Heart right ventricle (tissue), 16 donors: ENCODE measurements at regions of chr1 and their contacts with region 1.

Region 1: DNA sequence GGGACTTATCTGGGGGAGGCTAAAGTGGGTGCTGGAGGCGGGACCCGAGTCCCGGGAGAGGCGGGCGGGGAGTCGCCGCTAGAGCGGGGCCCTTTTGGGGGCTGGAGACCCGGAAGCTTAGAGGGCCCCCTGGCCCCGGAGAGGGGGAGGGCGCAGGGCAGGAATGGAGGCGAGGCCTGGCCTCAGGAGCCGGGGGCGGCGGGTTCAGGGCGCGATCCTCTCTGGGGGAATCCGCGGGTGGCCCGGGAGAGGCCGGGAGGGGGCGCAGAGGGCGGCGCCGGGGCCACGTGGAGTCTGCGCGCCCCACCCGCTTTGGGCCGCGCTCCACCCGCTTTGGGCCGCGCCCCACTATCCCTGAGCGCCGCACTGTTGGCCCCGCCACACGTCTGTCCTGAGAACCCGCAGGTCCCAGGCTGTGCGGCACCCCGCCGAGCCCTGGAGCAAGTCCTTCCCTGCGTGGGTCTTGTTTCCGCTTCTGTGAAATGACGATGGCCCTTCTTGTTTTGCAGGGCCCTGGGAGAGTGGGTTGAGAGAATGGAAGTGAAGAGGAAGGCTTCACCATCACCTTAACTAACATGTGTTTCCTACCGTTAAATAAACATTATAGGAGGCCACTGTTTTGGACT is 84.4 kb downstream of the NKAIN1 start:
- DNase-seq: peak; percentile 38 to 69
- ATAC-seq: peak; percentile 88 to 95 (median 92)
- H3K4me3 ChIP-seq: peak overlapping the region; percentile 38 to 83 (median 72)
- H3K27ac ChIP-seq: peak overlapping the region; percentile 22 to 85 (median 75)
- H3K4me1 ChIP-seq: peaks cover 0 to 15% (median 5%) of the 10 kb centered on the region in 9 donors
- H3K27me3 ChIP-seq: no peaks in the 10 kb centered on the region
- CTCF ChIP-seq: peak in 6 of 9 donors; percentile 24 to 55 (median 46)

Region 2: DNA sequence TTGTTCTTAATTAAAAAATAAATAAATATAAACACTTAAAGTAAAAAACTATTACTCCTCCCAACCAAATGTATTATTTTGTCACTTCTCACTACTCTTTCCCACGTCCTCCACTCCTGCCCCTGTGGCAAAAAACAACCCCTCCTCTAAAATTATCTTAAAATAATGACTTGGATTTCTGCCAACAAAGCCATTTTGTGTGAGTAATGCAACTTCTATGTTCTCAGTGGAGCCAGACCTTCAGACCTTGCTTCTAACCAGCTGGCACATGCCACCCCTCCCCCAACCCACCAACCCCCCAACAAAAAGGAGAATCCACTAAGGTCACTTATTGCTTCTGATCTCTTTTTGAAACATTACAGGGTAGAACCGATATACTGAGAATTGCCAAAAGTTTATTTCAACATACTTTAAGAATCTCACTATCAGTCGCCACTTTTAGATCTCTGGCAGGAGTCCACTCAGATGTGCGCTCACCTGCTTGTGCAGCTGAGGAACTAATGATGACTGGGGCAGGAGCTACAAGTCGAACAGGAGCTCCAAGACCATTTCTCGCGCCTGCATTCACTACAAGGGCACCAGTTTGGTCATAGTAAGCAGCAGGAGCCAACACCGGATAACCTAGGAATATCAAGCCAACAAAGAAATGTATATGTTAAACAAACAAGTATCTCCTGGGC is 188.5 kb before region 1 on chr1:
- intact Hi-C with region 1: loop called in 1 of 10 experiments (anchors 10 kb)
- DNase-seq: no peak
- ATAC-seq: peak in 5 of 8 donors; percentile 30 to 46 (median 41)
- H3K4me3 ChIP-seq: no peak overlapping the region
- H3K27ac ChIP-seq: peak overlapping the region in 5 of 10 donors; percentile 68 to 82 (median 75)
- H3K4me1 ChIP-seq: peaks cover 8 to 64% (median 47%) of the 10 kb centered on the region in 9 donors
- H3K27me3 ChIP-seq: no peaks in the 10 kb centered on the region
- CTCF ChIP-seq: no peak

Region 3: DNA sequence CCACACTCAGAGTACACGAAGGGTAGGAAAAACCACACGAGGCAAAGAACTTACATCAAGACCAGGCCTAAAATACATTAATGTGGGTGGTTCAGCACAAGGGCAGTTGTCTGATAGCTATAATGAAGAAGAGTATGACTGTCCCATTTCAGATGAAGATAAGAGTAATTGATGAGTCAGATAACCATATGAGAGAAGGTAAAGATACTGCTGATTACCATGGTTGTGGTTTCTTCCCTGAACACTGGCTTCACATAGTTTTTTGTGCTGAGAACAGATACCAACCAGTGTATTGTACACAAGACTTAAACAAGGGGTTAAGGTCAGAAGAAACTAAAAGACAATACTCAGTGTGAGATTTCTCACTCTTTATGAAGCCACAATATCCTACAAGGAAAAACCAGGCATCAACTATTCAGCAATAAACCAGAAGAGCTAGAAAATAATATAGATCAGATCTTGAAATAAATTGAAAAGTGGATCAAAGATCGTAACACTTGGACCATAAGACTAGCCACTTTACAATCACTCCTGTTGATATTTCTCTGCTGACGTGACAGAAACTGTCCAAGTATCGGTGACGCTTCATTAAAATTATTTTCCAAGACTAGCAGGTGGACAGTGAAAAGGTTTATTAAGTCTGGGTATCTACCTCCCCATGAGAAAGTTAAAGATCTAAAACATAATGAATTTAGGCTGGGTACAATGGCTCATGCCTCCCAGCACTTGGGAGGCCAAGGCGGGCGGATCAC is 118.4 kb before region 1 on chr1:
- intact Hi-C with region 1: no loop called
- DNase-seq: no peak
- ATAC-seq: no peak
- H3K4me3 ChIP-seq: no peak overlapping the region
- H3K27ac ChIP-seq: no peak overlapping the region
- H3K4me1 ChIP-seq: peaks cover 8 to 77% (median 64%) of the 10 kb centered on the region in 9 donors
- H3K27me3 ChIP-seq: no peaks in the 10 kb centered on the region
- CTCF ChIP-seq: no peak

Region 4: DNA sequence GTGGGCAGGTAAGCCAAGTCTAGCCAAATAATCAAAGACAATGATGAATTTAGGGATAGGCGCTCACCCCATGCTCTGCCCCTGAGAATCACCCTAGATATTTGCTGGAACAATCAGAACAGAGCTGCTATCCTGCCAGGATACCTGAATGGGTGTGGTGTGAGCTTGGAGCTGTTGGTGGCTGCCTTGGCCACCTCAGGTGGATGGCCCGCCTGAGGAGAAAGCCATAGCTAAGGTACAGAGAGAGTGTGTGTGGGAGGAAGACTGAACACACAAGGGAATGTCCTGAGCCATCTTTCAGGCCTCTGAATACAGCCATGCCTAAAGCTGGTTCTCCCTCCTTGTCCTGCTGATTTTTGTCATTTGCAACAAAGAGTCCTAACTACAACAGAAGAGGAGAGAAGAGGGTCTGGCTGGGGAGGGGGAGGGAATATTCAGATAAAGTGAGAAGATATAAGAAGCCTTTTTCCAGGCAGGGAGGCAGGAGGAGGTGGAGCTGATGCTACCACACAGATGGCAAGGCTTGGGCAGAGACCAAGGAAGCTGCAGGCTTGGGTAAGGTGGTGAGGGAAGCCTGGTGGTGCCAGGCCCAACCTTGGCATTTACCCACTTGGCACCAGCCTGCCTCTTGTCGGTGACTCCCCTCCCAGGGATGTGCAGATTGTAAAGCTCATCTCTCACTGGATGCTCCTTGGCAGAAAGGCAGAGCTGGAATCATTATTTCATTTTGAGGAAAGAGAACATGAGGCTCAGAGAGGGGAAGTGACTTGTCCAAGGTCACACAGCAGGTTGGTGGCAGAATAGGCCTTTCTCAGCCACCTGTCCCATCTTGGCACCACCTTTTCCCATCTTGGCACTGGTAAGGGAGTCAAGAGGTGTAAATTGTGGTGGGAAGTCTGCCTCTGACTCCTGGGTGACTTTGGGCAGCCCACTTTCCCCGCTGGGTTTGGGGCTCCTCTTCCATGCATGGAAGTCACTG is 34.7 kb after region 1 on chr1:
- intact Hi-C with region 1: no loop called
- DNase-seq: no peak
- ATAC-seq: no peak
- H3K4me3 ChIP-seq: no peak overlapping the region
- H3K27ac ChIP-seq: no peak overlapping the region
- H3K4me1 ChIP-seq: no peaks in the 10 kb centered on the region
- H3K27me3 ChIP-seq: peaks cover 0 to 18% (median 8%) of the 10 kb centered on the region in 7 donors
- CTCF ChIP-seq: no peak